HEK293T (cell line): ENCODE measurements at regions of chr2 and their contacts with region 1.

Region 1: DNA sequence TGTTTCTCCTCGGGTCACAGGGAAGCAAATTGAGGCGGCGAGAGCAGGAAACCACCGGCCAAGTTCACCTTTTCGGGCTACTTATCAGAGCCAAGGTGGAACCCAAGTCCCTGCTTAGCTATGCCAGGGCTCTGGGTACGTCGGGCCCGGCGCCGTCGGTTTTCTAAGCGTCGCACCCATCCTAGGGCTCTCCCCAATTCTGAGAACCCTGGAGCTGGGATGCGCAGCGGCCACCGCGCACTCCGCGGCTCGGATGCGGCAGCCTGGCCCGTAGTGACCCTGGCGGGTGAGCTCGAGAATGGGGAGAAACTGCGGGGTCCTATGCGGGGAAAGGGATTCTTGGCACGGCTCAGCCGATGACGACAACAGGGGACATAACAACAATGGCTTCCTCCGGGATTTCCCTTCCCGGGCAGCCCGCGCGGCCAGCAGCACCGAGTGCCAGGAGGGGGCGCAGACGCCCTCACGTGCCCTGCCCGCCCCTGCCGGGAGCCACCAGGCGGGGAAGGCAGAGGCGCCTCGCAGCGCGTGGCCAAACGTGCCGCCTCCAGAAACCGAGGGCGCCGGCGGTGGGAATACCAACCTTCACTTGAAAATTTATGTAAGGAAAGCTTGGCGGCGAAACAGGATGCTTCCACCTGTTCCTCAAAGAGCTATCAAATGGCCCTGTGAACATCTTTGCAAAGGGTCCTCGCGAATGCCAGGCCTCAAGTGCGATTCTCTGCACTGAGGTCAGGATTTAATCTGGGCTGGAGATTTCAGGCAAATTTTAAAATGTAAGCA is 2.1 kb upstream of the SLC30A3 start:
- DNase-seq: peak; percentile 87

Region 2: DNA sequence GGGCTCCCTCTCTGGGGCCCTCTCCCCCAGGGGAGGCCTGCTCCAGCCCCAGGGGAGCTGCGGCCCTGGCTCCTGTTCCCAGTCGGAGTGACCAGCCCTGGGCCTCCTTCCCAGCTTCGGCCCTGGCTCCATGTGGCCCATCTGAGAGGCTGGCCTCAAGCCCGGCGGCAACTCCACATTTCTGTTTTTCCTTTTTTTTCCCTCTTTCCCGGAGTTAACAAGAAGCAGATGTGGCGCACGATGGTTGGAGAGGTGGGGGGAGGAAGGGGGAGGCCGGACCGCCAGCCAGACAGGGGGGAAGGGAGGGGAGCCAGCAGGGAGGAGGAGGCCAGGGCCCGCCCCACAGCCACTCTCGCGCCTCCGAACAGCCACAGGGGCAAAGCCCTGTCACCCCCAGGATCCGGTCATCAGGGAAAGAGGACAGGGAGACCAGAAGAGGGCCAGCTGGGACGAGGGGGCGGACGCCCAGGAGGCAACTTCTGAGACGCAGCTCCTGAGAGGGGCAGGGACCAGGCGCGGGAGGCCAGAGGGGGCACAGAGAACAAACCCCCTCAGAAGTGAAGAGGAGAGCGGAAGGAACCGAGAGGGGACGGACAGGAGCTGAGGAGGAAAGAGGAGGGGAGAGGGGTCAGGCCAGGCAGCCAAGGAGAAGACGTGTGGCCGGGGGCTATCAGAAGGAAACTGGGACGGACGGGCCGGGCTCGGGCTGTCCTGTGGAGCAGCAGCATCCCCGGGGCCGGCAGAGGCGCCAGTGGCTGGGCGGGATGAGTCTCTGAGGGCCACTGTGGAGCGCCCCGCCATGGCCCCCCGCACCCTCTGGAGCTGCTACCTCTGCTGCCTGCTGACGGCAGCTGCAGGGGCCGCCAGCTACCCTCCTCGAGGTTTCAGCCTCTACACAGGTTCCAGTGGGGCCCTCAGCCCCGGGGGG is 186.4 kb before region 1 on chr2 and contains the start of gene EMILIN1:
- CTCF ChIA-PET with region 1: no interaction called
- POLR2A ChIA-PET with region 1: no interaction called
- DNase-seq: no peak

Region 3: GRCh38 chr2:27281855-27282559 is 17.1 kb after region 1 on chr2 and contains the start of gene TRIM54:
- CTCF ChIA-PET with region 1: interaction called, 14 read pairs
- POLR2A ChIA-PET with region 1: interaction called, 8 read pairs
- DNase-seq: no peak